Motor neuron (in vitro differentiated cells): ENCODE measurements at regions of chr11 and their contacts with region 1.

Region 1: DNA sequence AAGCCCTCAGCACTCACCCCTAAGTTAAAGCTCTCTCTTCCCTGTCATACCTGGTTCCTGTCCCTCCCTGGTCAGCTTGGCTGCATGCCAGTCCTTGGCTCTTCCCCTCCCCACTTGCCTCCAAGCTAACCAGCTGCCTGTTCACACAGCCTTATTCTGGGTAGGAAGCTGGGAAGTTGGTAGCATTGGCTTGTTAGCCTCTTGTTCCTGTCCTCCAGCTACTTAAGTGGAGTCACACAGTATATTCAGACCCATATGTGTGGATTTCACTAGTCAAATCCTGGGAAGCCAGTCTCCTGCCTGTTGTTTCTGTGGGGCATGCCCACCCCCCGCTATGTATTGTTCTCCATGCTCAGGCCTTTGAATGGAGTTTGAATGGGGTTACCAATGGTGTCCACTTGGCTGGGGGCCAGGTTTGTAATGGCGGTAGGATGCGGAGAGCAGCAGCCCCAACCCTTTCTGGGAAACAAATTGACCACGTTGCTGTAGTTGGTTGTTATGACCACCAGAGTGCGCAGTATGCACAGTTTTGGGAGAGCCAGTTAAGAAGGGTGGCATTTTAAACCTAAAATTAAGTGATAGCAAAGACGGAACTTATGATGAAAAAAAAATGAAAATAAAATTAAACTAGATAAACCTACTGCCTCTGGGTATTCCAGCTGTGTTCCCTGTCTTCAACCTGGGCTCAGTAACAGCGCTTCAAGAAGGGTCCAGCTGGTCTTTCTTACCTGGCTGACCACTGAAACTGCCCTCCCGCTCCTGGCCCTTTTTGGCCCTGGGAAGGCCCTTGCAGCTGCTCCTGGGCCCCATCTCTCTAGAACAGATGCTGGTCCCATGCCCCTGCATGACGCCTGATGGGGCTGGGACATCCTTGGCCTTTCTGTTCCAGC is 10.7 kb upstream of the RPS3 start:
- ATAC-seq: peak; percentile 68 to 84 (median 82)
- H3K4me3 ChIP-seq: no peak overlapping the region
- H3K27ac ChIP-seq: no peak overlapping the region
- H3K4me1 ChIP-seq: peaks cover 0 to 7% of the 10 kb centered on the region in 2 donors

Region 2: DNA sequence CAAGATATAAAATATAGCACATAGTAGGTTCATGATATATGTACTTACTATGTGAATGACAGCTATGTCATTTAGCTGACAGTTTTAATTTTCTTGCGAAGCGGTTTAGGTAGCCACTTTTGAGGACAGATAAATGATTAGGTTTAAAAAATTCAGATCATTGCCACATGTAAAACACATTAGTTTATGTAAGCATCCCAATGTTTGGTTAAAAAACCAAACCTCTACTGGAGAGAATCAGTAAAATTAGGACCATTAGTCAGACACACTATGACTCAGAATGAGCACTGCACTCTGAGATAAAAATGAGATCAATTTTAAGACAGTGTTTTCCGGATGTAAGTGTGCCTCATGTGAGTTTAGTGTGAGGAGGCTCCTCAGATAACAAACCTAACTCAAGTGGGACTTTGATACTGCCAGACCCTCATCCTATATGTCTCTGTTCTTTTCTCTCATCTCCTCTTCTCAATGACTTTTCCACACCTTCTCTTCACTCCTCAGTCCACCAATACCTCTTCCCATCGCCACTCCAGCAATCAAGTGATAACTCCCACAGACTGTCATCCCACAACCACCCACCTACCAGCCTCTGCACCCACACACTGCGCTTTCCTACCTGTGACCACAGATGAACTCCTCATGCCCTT is 285.1 kb before region 1 on chr11:
- in situ Hi-C with region 1: no loop called
- ATAC-seq: peak in 3 of 8 experiments; percentile 11 to 59 (median 47)
- H3K4me3 ChIP-seq: no peak overlapping the region
- H3K27ac ChIP-seq: no peak overlapping the region
- H3K4me1 ChIP-seq: no peaks in the 10 kb centered on the region

Region 3: GRCh38 chr11:75270896-75271418 is 117.7 kb before region 1 on chr11:
- in situ Hi-C with region 1: loop called in 4 of 9 experiments (anchors 10 to 25 kb)
- ATAC-seq: peak in 1 of 8 experiments; percentile 68
- H3K4me3 ChIP-seq: no peak overlapping the region
- H3K27ac ChIP-seq: no peak overlapping the region
- H3K4me1 ChIP-seq: no peaks in the 10 kb centered on the region

Region 4: DNA sequence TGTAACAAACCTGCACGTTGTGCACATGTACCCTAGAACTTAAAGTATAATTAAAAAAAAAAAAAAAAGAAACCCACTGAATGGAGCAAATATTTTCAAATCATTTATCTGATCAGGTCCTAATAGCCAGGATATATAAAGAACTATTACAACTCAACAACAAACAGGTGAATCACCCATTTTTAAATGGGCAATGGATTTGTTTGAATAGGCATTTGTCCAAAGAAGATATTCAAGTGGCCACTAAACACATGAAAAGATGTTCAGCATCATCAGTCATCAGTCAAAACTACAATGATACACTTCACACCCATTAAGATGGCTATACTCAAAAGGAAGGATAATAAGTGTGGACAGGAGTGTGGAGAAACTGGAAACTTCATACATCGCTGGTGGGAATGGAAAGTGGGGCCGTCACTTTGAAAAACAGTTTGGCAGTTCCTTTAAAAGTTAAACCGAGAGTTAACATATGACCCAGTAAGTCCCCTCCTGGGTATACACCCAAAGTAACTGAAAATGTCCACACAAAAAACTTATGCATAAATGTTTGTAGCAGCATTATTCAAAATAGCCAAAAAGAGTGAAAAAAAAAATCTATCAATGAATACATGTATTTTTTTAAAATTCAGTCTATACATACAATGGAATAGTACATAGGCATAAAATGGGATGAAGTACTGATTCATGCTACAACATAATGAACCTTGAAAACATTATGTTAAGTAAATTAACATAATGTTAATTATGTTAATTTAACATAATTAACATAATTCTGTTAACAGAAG is 90.2 kb before region 1 on chr11:
- in situ Hi-C with region 1: loop called in 3 of 9 experiments (anchors 10 to 25 kb)
- ATAC-seq: peak in 3 of 8 experiments; percentile 80 to 87 (median 85)
- H3K4me3 ChIP-seq: no peak overlapping the region
- H3K27ac ChIP-seq: no peak overlapping the region
- H3K4me1 ChIP-seq: no peaks in the 10 kb centered on the region